Heart left ventricle (tissue), 16 donors: ENCODE measurements at regions of chr7 and their contacts with region 1.

Region 1: GRCh38 chr7:150481186-150481920 is 30.9 kb downstream of the GIMAP8 start:
- DNase-seq: peak in 1 of 5 donors; percentile 51
- ATAC-seq: peak in 3 of 4 donors; percentile 11 to 35 (median 25)
- H3K4me3 ChIP-seq: peak overlapping the region in 1 of 12 donors; percentile 2
- H3K27ac ChIP-seq: peak overlapping the region; percentile 1 to 96 (median 72)
- H3K4me1 ChIP-seq: peaks cover 2 to 95% (median 24%) of the 10 kb centered on the region in 12 donors
- H3K27me3 ChIP-seq: no peaks in the 10 kb centered on the region
- CTCF ChIP-seq: no peak
- POLR2A ChIP-seq: no peak

Region 2: DNA sequence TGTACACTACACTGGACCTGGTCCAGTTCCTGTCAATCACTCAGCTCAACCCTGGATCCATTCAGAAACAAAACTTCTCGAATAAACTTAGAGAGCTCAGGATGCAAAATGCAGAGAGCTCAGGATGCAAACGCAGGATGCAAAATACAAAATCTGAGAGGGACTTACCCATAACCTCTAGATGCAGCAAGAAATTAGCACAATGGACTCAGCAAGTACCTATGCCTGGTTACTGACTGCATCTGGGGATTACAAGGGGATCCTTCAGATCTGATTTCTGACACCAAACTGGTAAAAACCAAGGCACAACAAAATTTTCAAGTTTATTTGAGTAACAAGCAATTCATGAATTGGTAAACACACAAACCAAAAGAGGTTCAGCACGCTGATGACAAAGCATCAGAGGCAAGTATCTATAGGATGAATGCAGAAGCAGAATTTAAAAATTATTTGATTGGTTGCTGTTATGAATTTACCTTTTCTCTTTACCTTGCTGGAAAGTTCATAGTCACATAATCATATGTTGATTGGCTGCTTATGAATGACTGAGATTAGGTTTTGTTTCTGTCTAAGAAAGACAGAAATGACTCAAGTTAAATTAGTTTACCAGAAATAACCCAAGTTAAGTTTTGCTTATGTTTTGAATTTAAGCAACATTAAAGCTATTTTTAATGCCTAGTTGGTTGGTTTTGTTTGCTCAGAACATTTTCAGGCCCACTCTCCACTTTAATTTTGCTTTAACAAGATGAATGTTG is 139.4 kb after region 1 on chr7:
- intact Hi-C with region 1: loop called in 1 of 10 experiments (anchors 10 kb)
- DNase-seq: no peak
- ATAC-seq: no peak
- H3K4me3 ChIP-seq: no peak overlapping the region
- H3K27ac ChIP-seq: peak overlapping the region in 8 of 12 donors; percentile 2 to 39 (median 35)
- H3K4me1 ChIP-seq: peaks cover 0 to 7% (median 0%) of the 10 kb centered on the region in 12 donors
- H3K27me3 ChIP-seq: no peaks in the 10 kb centered on the region
- CTCF ChIP-seq: no peak
- POLR2A ChIP-seq: no peak

Region 3: DNA sequence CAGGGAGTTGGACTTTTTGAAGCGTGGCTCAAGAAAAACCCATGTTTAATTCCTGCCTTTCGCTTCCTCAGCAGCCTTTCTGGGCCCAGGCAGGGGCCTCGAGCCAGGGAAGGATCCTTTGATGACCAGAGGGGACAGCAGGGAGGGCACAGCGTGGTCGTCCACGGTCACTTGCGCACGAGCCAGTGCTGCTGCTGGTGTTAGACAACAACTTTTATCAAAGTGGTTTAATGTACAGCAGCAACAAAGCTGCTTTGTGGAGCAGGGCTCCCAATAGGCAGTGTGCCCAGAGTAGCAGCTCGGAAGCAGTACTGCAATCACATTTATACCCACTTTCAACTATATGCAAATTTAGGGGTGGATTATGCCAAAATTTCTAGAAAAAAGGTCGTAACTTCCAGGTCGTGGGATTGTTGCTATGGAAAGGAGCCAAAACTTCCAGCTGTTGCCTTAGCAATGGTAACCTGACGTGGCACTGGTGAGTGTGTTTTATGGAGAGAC is 241.1 kb after region 1 on chr7:
- intact Hi-C with region 1: loop called in 1 of 10 experiments (anchors 10 kb)
- DNase-seq: no peak
- ATAC-seq: peak in 2 of 4 donors; percentile 10 to 35
- H3K4me3 ChIP-seq: peak overlapping the region in 10 of 12 donors; percentile 5 to 43 (median 24)
- H3K27ac ChIP-seq: peak overlapping the region; percentile 36 to 92 (median 76)
- H3K4me1 ChIP-seq: peaks cover 0 to 54% (median 7%) of the 10 kb centered on the region in 12 donors
- H3K27me3 ChIP-seq: no peaks in the 10 kb centered on the region
- CTCF ChIP-seq: no peak
- POLR2A ChIP-seq: no peak

Region 4: DNA sequence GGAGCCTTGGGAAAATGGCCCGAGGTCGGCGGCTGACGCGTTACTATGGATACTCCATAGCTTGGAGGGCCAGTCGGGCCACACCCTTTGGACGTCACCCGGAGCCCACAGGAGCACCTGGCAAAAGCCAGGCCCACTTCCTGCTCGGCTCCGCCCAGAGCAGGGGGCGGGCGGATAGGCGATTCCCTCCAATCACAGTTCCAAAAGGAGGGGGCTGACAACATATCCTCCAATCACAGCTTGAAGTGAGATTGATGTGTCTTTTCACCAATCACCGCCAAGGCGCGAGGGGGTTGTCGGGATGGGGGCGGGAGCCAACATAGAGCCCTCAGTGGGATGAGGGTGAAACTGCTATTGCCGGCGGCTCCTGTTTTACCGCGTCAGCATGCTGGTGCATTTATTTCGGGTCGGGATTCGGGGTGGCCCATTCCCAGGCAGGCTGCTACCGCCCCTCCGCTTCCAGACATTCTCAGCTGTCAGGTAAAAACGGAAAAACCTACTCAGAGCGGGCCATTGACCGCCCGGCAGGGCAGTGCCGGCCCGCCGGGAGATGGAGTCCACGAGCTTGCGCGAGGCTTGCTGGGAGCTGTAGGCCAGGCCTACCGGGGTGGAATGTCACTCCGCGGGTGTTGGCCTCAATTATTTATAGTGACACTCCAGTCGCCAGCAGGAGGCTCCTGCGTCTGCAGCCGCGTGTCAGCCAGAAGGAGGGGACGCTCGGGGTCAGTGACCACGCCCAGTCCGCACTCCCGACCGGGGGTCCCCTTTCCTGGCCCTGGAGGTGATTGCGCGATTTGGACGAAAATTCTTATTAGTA is 547.0 kb after region 1 on chr7 and contains the start of gene ABCB8:
- intact Hi-C with region 1: no loop called
- DNase-seq: peak; percentile 96 to 99 (median 98)
- ATAC-seq: peak; percentile 96 to 98 (median 96)
- H3K4me3 ChIP-seq: peak within 1 kb of the TSS; percentile 62 to 91 (median 76)
- H3K27ac ChIP-seq: peak within 1 kb of the TSS; percentile 15 to 90 (median 85)
- H3K4me1 ChIP-seq: peaks cover 0 to 22% (median 15%) of the 10 kb centered on the region in 12 donors
- H3K27me3 ChIP-seq: peaks cover 0 to 4% (median 0%) of the 10 kb centered on the region in 9 donors
- CTCF ChIP-seq: peak; percentile 43 to 77 (median 60)
- POLR2A ChIP-seq: peak in 1 of 2 donors; percentile 74
- total RNA-seq, gene ABCB8: 13.6 to 34.5 (median 26.0) TPM